ENCODE measurements at regions of chrX and their contacts with region 1.

Region 1: GRCh38 chrX:19372170-19372546 is 28.4 kb downstream of the PDHA1 start:
- DNase-seq: peak; percentile 15
- ATAC-seq: peak; percentile 83
- H3K4me3 ChIP-seq: no peak overlapping the region
- H3K27ac ChIP-seq: no peak overlapping the region
- H3K4me1 ChIP-seq: no peaks in the 10 kb centered on the region
- H3K27me3 ChIP-seq: no peaks in the 10 kb centered on the region
- CTCF ChIP-seq: peak; percentile 60 to 67 (median 66); a peak in 5 of 6 replicates
- POLR2A ChIP-seq: no peak
- RAD21 ChIP-seq: peak; percentile 80

Region 2: DNA sequence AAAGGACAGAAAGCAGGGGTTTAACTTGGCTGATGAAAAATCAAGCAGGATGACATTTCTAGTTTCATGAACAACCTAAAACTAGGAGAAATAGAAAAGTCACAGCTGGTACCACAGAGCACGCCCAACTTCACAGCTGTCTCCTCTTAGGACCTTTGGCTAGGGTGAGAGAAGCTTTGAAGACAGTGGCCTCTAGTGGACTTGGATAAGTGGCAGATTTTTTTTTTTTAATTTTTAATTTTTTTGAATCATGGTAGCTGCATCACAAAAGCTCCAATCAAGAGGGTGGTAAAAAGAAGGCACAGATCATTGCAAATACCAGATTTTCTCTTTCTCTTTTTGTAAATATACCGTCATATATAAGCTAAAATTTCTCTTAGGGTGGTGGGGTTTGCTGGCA is 163.3 kb after region 1 on chrX:
- CTCF ChIA-PET with region 1: interaction called, 6 read pairs
- POLR2A ChIA-PET with region 1: no interaction called
- RAD21 ChIA-PET with region 1: no interaction called
- intact Hi-C with region 1: loop called (anchors 5 kb)
- DNase-seq: no peak
- ATAC-seq: no peak
- H3K4me3 ChIP-seq: no peak overlapping the region
- H3K27ac ChIP-seq: no peak overlapping the region
- H3K4me1 ChIP-seq: no peaks in the 10 kb centered on the region
- H3K27me3 ChIP-seq: no peaks in the 10 kb centered on the region
- CTCF ChIP-seq: peak; percentile 12 to 27 (median 21); a peak in 3 of 6 replicates
- POLR2A ChIP-seq: no peak
- RAD21 ChIP-seq: peak; percentile 34; the same call in 1 of the 2 replicates